Aorta (tissue), 5 donors: ENCODE measurements at regions of chr2 and their contacts with region 1.

Region 1: GRCh38 chr2:196171248-196171871 is at the start of gene STK17B:
- DNase-seq: peak; percentile 97 to 98
- ATAC-seq: peak; percentile 95
- H3K4me3 ChIP-seq: peak within 1 kb of the TSS; percentile 71 to 98
- H3K27ac ChIP-seq: peak within 1 kb of the TSS in 1 of 2 donors; percentile 78
- H3K4me1 ChIP-seq: no peaks in the 10 kb centered on the region
- H3K27me3 ChIP-seq: no peaks in the 10 kb centered on the region
- total RNA-seq, gene STK17B: 26.5 to 30.0 TPM

Region 2: GRCh38 chr2:196249860-196250259 is 78.5 kb after region 1 on chr2:
- intact Hi-C with region 1: loop called in 1 of 2 experiments (anchors 5 kb)
- DNase-seq: no peak
- ATAC-seq: no peak
- H3K4me3 ChIP-seq: no peak overlapping the region
- H3K27ac ChIP-seq: peak overlapping the region; percentile 75 to 98
- H3K4me1 ChIP-seq: peaks cover 11 to 17% of the 10 kb centered on the region in 2 donors
- H3K27me3 ChIP-seq: no peaks in the 10 kb centered on the region

Region 3: DNA sequence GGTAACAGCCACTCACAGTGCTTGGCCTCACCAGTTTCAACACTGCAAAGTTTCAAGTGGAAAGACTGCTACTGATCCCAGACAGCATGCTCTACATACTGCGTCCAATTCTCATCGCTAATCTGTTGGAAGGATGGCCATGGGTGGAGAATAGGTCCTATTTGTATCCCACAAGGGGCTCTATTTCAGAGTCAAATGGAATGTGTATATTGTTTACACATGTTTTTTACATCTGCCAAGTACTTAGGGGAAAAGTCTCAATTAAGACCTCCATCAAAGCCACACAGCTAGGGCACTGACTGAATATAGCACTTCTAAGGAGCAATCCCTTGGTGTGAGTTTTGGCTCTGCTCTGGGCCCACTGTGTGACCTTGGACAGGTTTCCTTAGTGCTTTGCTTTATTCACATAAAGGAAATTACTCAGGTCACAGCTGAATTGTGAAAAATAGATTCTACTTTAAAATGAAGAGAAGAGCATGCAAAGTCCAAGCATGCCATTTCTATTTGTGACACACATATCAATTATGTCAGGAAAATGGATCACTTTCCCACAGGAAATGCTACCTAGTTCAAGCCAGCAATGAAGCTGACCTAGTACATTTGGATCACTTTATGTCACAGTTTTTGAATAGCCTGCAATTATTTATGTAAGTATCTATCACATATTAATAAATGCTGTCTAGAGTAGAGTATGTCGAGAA is 112.9 kb after region 1 on chr2:
- intact Hi-C with region 1: loop called in 1 of 2 experiments (anchors 5 kb)
- DNase-seq: no peak
- ATAC-seq: peak; percentile 76
- H3K4me3 ChIP-seq: no peak overlapping the region
- H3K27ac ChIP-seq: peak overlapping the region; percentile 76 to 93
- H3K4me1 ChIP-seq: peaks cover 0 to 9% of the 10 kb centered on the region in 2 donors
- H3K27me3 ChIP-seq: no peaks in the 10 kb centered on the region